ENCODE measurements at regions of chr2 and their contacts with region 1.

Region 1: GRCh38 chr2:105775809-105776559 is 31.3 kb downstream of the NCK2 start:
- DNase-seq: peak in 4 of 5 donors; percentile 44 to 63 (median 53)
- H3K4me3 ChIP-seq: peak overlapping the region; percentile 52
- H3K4me3 Mint-ChIP-seq: peak overlapping the region; percentile 76 to 89 (median 82)
- H3K27ac ChIP-seq: peak overlapping the region; percentile 58
- H3K27ac Mint-ChIP-seq: peak overlapping the region; percentile 87 to 100 (median 94)
- H3K4me1 ChIP-seq: peaks cover 97% of the 10 kb centered on the region
- H3K4me1 Mint-ChIP-seq: peaks cover 88 to 96% (median 91%) of the 10 kb centered on the region in 3 donors
- H3K27me3 ChIP-seq: no peaks in the 10 kb centered on the region
- H3K27me3 Mint-ChIP-seq: no peaks in the 10 kb centered on the region

Region 2: GRCh38 chr2:105576440-105577252 is 199.3 kb before region 1 on chr2:
- CTCF ChIA-PET with region 1: interaction called, 19 read pairs
- POLR2A ChIA-PET with region 1: no interaction called
- DNase-seq: peak in 2 of 5 donors; percentile 32 to 50
- H3K4me3 ChIP-seq: no peak overlapping the region
- H3K4me3 Mint-ChIP-seq: no peak overlapping the region
- H3K27ac ChIP-seq: no peak overlapping the region
- H3K27ac Mint-ChIP-seq: peak overlapping the region in 7 of 8 donors; percentile 1 to 88 (median 55)
- H3K4me1 ChIP-seq: peaks cover 6% of the 10 kb centered on the region
- H3K4me1 Mint-ChIP-seq: peaks cover 7 to 18% (median 13%) of the 10 kb centered on the region in 3 donors
- H3K27me3 ChIP-seq: no peaks in the 10 kb centered on the region
- H3K27me3 Mint-ChIP-seq: peaks cover 1 to 14% of the 10 kb centered on the region in 2 donors

Measured in CD8-positive, alpha-beta memory T cell (primary cell).